ENCODE measurements at regions of chr17 and their contacts with region 1.

Region 1: DNA sequence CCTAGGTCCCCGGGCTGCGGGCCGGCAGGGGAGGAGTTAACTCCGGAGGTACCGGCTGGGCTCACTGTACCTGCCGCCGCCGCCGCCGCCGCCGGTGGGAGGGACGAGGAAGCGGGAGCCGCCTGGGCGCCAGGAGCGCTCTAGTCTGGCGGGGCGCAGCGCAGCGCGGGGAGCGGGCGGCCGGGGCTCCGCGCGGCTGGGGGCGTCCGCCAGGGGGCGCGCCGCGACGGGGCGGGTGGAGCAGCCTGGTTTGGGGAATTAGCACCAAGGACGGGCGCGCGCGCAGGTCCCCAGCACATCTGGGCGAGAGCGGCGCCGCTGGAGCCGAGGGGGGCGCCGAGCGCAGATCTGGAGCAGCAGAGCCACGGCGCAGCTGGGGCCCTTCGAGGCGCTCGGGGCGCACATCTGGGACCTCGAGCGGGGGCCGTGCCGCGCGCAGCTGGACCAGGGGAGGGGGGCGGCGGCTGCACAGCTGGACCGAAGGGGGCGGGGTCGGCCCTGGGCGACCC is at the start of gene NXPH3:
- DNase-seq: peak; percentile 89 to 98
- H3K4me3 ChIP-seq: peak within 1 kb of the TSS; percentile 87
- H3K4me3 Mint-ChIP-seq: peak within 1 kb of the TSS; percentile 77
- H3K27ac Mint-ChIP-seq: no peak within 1 kb of the TSS
- H3K4me1 ChIP-seq: peaks cover 16% of the 10 kb centered on the region
- H3K4me1 Mint-ChIP-seq: peaks cover 14% of the 10 kb centered on the region
- H3K27me3 ChIP-seq: no peaks in the 10 kb centered on the region; the same call in 1 of the 2 replicates
- H3K27me3 Mint-ChIP-seq: peaks cover 22% of the 10 kb centered on the region
- CTCF ChIP-seq: peak; percentile 59 to 80
- total RNA-seq, gene NXPH3: 1.7 and 2.0 TPM in 2 replicates

Region 2: DNA sequence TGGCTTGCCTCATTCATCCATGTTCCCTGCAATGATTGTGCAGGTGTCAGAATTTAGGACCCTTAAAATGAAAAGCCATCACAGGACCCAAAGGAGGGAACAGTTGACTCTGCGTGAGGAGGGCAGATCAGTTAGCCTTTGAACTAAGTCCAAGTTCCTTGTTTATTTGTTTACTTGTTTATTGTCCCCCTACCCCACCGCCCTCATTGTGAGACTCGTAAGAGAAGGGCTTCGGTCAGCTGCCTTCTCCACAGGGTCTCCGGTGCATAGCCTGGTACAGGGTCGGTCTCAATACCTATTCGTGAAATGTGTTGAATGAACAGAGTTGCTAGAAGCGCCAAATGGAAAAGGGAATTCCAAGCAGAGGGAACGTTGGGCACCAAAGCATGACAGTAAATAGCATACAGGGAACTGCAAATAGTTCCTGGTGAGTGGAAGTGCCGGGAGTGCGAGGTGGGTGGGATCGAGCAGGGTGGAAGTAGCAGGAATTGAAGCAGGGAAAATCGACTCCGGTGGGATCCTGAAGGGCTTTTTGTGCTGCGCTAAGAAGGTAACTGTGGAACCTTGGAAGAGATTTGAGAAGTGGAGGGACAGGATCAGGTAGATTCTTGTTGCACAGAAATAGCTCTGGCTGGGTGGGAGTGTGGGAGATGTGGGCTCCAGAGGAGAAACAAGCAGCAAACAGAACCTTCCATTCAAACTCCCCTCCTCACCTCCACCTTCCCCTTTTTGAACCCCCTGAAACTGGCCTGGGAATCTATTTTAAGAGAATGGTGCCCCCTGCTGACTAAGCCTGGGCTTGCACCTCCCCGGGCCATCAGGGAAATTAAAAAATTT is 119.4 kb after region 1 on chr17:
- CTCF ChIA-PET with region 1: interaction called, 114 read pairs
- POLR2A ChIA-PET with region 1: no interaction called
- intact Hi-C with region 1: loop called (anchors 1 kb)
- DNase-seq: peak; percentile 69 to 84
- H3K4me3 ChIP-seq: no peak overlapping the region
- H3K4me3 Mint-ChIP-seq: peak overlapping the region; percentile 48
- H3K27ac Mint-ChIP-seq: no peak overlapping the region
- H3K4me1 ChIP-seq: no peaks in the 10 kb centered on the region; the same call in 1 of the 2 replicates
- H3K4me1 Mint-ChIP-seq: peaks cover 18% of the 10 kb centered on the region
- H3K27me3 ChIP-seq: no peaks in the 10 kb centered on the region
- H3K27me3 Mint-ChIP-seq: peaks cover 5% of the 10 kb centered on the region
- CTCF ChIP-seq: peak; percentile 99 to 100

Region 3: DNA sequence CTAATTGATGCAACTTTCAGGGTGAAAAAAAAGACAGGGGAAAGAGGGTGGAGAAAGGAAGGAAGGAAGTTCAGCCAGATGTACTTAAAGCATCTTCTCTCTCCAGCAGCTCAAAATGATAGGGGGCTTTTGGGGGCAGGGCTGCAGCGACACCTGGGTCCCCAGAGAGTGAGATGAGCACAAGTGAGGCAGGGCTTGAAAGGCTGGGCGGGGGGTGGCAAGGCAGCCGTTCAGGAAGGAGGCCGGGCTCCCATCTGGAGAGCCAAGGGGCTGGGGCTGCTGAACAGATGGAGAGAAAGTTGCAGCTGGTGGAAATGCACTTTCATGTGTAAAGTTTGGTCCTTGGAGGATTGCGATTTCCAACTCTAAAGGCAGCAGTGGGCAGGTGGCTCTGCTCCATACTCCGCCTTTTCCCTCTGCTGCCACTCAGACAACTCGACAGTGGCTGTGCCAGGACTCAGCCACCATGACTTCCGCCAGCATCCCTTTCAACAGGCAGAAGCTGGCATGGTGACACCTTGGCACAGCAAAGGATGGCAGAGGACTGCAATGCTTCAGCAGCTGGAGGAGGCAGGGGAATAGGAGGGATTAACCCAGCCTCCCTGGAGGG is 124.4 kb after region 1 on chr17:
- CTCF ChIA-PET with region 1: interaction called, 114 read pairs
- POLR2A ChIA-PET with region 1: no interaction called
- intact Hi-C with region 1: loop called (anchors 1 kb)
- DNase-seq: no peak
- H3K4me3 ChIP-seq: no peak overlapping the region
- H3K4me3 Mint-ChIP-seq: no peak overlapping the region
- H3K27ac Mint-ChIP-seq: no peak overlapping the region
- H3K4me1 ChIP-seq: no peaks in the 10 kb centered on the region; the same call in 1 of the 2 replicates
- H3K4me1 Mint-ChIP-seq: peaks cover 16% of the 10 kb centered on the region
- H3K27me3 ChIP-seq: no peaks in the 10 kb centered on the region
- H3K27me3 Mint-ChIP-seq: no peaks in the 10 kb centered on the region
- CTCF ChIP-seq: no peak